Prostate gland (tissue), 2 donors: ENCODE measurements at regions of chr14 and their contacts with region 1.

Region 1: GRCh38 chr14:70009961-70010360 is 130.7 kb downstream of the SMOC1 start:
- DNase-seq: no peak
- H3K4me3 ChIP-seq: no peak overlapping the region
- H3K27ac ChIP-seq: no peak overlapping the region
- H3K4me1 ChIP-seq: no peaks in the 10 kb centered on the region
- H3K27me3 ChIP-seq: no peaks in the 10 kb centered on the region
- CTCF ChIP-seq: no peak
- POLR2A ChIP-seq: no peak

Region 2: DNA sequence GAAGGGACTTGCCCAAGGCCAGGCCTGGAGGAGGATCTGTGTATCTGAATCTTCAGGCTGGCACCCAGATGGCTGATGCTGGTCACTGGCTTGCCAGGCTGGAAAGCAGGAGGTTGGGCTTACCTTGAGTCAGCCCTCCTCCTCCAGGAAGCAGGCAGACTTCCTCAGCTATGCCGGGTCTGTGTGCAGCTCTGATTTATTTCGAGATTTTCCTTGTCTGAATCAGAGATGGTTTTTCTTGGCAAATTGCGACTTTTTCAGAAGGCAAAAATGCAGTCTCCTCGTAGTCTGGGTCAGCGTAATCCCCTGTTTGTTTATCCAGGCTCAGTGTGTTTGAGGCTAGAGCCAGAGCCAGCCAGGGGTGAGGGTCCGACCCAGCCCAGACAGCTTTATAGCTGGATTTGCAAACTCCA is 81.8 kb before region 1 on chr14:
- intact Hi-C with region 1: loop called (anchors 5 kb)
- DNase-seq: no peak
- H3K4me3 ChIP-seq: no peak overlapping the region
- H3K27ac ChIP-seq: peak overlapping the region in 1 of 2 donors; percentile 4
- H3K4me1 ChIP-seq: no peaks in the 10 kb centered on the region
- H3K27me3 ChIP-seq: peaks cover 1% of the 10 kb centered on the region
- CTCF ChIP-seq: no peak
- POLR2A ChIP-seq: no peak